AG04450 (cell line): ENCODE measurements at regions of chr14 and their contacts with region 1.

Region 1: GRCh38 chr14:96567289-96567899 is 65.2 kb downstream of the PAPOLA start:
- DNase-seq: peak; percentile 2
- H3K4me3 ChIP-seq: no peak overlapping the region
- H3K27ac ChIP-seq: no peak overlapping the region
- H3K27me3 ChIP-seq: no peaks in the 10 kb centered on the region
- CTCF ChIP-seq: peak; percentile 66

Region 2: GRCh38 chr14:96538097-96538989 is 29.1 kb before region 1 on chr14:
- CTCF ChIA-PET with region 1: interaction called, 14 read pairs
- POLR2A ChIA-PET with region 1: no interaction called
- DNase-seq: no peak
- H3K4me3 ChIP-seq: no peak overlapping the region
- H3K27ac ChIP-seq: no peak overlapping the region
- H3K27me3 ChIP-seq: no peaks in the 10 kb centered on the region
- CTCF ChIP-seq: no peak

Region 3: DNA sequence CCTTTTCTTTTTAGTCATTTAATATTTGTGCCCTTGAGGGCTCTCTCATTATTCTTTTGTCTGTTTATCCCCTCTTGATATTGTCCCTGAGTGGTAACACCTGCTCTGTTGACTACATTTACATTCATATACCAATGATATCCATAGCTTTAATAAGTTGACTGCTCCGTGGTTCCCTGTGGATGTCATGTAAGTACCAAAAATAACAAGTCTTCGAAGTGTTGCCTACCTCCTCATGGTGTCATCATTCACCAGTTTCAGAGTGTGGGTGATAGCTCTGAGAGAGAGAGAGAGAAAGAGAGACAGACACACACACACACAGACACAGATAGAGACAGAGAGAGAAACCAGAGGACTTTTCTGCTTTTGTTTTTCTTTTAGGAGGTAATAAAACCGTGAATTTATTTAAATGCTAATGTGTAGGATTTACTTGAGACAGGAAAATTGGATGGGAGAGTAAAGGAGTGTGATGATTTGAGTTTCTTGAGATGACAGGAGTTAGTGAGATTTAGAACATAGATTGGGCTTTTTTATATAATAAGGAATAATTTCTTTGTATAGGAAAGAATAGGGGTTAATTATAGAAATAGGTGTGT is 13.0 kb before region 1 on chr14:
- CTCF ChIA-PET with region 1: interaction called, 24 read pairs
- POLR2A ChIA-PET with region 1: interaction called, 3 read pairs
- DNase-seq: no peak
- H3K4me3 ChIP-seq: no peak overlapping the region
- H3K27ac ChIP-seq: no peak overlapping the region
- H3K27me3 ChIP-seq: no peaks in the 10 kb centered on the region
- CTCF ChIP-seq: no peak

Region 4: GRCh38 chr14:96581902-96582301 is 14.5 kb after region 1 on chr14:
- CTCF ChIA-PET with region 1: interaction called, 43 read pairs
- POLR2A ChIA-PET with region 1: no interaction called
- DNase-seq: no peak
- H3K4me3 ChIP-seq: no peak overlapping the region
- H3K27ac ChIP-seq: no peak overlapping the region
- H3K27me3 ChIP-seq: peaks cover 38% of the 10 kb centered on the region
- CTCF ChIP-seq: no peak

Region 5: DNA sequence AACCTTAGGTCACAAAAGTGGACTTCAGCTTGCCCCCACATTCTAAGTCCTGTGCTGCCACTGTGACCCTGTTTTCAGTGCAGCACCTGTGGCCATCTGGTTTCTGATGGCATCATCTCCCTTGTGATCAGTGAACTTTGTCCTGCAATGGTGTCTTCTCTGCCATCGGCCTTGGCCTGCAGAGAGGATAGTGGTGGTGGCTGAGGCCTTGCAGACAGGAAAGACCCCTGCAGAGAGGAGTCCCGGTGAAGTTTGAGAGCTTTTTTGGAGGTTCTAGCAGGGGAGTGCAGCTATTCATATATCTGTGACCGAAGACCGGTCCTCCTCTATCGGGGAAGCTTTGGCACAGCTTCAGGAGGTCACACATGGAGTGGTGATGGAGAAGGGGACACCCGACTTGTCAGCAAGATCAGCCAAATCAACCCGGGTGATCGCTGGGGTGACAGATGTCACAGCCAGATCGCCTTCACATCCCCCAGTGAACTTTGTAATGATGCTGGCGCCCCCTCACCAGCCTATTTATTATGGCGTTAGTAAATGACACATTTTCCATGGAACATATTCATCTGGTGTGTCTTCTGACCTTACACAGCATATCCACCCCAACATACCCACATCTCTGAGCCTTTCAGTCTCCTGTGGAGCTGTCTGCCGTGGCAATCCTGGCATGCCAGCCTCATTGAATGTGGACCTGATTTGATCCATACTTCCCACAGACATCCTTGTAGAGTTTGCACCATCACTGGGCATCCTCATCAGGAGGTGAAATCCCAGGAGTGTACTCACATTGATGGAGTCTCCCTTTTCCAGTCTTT is 70.9 kb after region 1 on chr14:
- CTCF ChIA-PET with region 1: no interaction called
- POLR2A ChIA-PET with region 1: no interaction called
- DNase-seq: no peak
- H3K4me3 ChIP-seq: no peak overlapping the region
- H3K27ac ChIP-seq: no peak overlapping the region
- H3K27me3 ChIP-seq: no peaks in the 10 kb centered on the region
- CTCF ChIP-seq: no peak

Region 6: GRCh38 chr14:96662116-96662970 is 94.9 kb after region 1 on chr14:
- CTCF ChIA-PET with region 1: no interaction called
- POLR2A ChIA-PET with region 1: no interaction called
- DNase-seq: no peak
- H3K4me3 ChIP-seq: no peak overlapping the region
- H3K27ac ChIP-seq: no peak overlapping the region
- H3K27me3 ChIP-seq: peaks cover 7% of the 10 kb centered on the region
- CTCF ChIP-seq: no peak

Region 7: GRCh38 chr14:96741151-96741977 is 174.0 kb after region 1 on chr14:
- CTCF ChIA-PET with region 1: interaction called, 122 read pairs
- POLR2A ChIA-PET with region 1: interaction called, 5 read pairs
- DNase-seq: no peak
- H3K4me3 ChIP-seq: peak overlapping the region; percentile 66
- H3K27ac ChIP-seq: no peak overlapping the region
- H3K27me3 ChIP-seq: peaks cover 35% of the 10 kb centered on the region
- CTCF ChIP-seq: peak; percentile 82